ENCODE measurements at regions of chr7 and their contacts with region 1.

Region 1: GRCh38 chr7:81499262-81500116 is 270.4 kb downstream of the HGF start:
- DNase-seq: peak; percentile 72
- H3K4me3 ChIP-seq: no peak overlapping the region
- H3K27ac ChIP-seq: no peak overlapping the region
- H3K27me3 ChIP-seq: no peaks in the 10 kb centered on the region
- CTCF ChIP-seq: peak; percentile 68

Region 2: GRCh38 chr7:80563561-80564327 is 935.7 kb before region 1 on chr7:
- CTCF ChIA-PET with region 1: no interaction called
- POLR2A ChIA-PET with region 1: no interaction called
- DNase-seq: no peak
- H3K4me3 ChIP-seq: no peak overlapping the region
- H3K27ac ChIP-seq: no peak overlapping the region
- H3K27me3 ChIP-seq: no peaks in the 10 kb centered on the region
- CTCF ChIP-seq: no peak

Region 3: GRCh38 chr7:81447351-81447952 is 52.0 kb before region 1 on chr7:
- CTCF ChIA-PET with region 1: no interaction called
- POLR2A ChIA-PET with region 1: no interaction called
- DNase-seq: peak; percentile 15
- H3K4me3 ChIP-seq: no peak overlapping the region
- H3K27ac ChIP-seq: no peak overlapping the region
- H3K27me3 ChIP-seq: no peaks in the 10 kb centered on the region
- CTCF ChIP-seq: peak; percentile 69

Region 4: DNA sequence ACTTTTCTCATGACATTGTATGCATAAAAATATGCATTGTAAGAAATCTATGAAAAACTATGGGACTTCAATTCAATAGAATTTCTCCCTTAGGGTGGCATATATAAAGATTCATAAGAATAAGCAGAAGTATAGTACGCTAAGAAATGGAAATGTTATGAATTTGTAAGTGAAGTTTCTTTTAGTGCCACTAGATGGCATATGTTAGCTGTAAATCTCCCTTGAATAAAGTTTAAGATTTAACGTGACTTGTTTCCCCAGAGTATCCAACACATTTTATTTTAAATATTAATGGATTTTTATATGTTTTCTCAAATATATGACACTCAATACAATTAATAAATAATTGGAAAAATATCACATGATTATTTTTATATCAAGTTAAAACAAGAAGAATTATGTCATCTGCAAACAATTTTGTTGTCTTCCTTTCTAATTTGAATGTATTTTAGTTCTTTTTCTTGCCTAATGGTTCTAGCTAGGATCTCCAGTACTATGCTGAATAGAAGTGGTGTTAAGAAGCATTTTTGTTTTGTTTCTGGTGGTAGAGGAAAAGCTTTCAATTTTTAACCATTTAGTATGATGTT is 16.8 kb before region 1 on chr7:
- CTCF ChIA-PET with region 1: interaction called, 10 read pairs
- POLR2A ChIA-PET with region 1: no interaction called
- DNase-seq: no peak
- H3K4me3 ChIP-seq: no peak overlapping the region
- H3K27ac ChIP-seq: no peak overlapping the region
- H3K27me3 ChIP-seq: no peaks in the 10 kb centered on the region
- CTCF ChIP-seq: peak; percentile 56

Region 5: DNA sequence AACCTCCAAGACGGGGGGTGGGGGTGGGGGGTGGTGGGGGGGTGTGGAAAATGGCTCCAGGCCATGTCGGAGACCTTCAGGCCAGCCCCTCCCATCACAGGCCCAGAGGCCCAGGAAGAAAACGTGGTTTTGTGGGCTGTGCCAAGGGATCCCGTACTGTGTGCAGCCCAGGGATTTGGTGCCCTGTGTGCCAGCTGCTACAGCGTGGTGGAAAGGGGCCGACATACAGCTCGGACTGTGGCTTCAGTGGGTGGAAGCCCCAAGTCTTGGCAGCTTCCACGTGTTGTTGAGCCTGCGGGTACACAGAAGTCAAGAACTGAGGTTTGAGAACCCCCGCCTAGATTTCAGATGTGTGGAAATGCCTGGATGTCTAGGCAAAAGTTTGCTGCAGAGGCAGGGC is 10.6 kb after region 1 on chr7:
- CTCF ChIA-PET with region 1: no interaction called
- POLR2A ChIA-PET with region 1: no interaction called
- DNase-seq: no peak
- H3K4me3 ChIP-seq: no peak overlapping the region
- H3K27ac ChIP-seq: no peak overlapping the region
- H3K27me3 ChIP-seq: no peaks in the 10 kb centered on the region
- CTCF ChIP-seq: no peak

Region 6: GRCh38 chr7:81725812-81726127 is 226.3 kb after region 1 on chr7:
- CTCF ChIA-PET with region 1: interaction called, 19 read pairs
- POLR2A ChIA-PET with region 1: no interaction called
- DNase-seq: peak; percentile 98
- H3K4me3 ChIP-seq: no peak overlapping the region
- H3K27ac ChIP-seq: peak overlapping the region; percentile 83
- H3K27me3 ChIP-seq: no peaks in the 10 kb centered on the region
- CTCF ChIP-seq: no peak

Region 7: DNA sequence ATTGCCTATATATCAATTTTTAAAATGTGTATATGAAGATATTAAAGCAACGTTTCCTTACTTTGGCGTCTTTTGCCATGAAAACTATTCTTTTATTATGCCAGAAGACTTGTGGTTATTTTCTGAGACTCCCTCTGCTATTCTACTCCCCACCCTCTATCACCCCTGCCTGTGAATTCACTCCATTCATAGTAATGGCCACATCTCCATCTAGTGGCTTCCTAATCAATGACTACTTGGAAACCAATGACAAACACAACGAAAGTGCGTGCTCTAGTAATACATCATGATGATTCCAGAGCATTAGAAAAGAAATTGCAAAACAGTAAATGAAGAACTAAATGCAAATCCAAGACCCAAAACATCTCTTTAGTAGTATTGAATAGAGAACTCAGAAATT is 457.0 kb after region 1 on chr7:
- CTCF ChIA-PET with region 1: interaction called, 72 read pairs
- POLR2A ChIA-PET with region 1: interaction called, 4 read pairs
- DNase-seq: peak; percentile 32
- H3K4me3 ChIP-seq: no peak overlapping the region
- H3K27ac ChIP-seq: no peak overlapping the region
- H3K27me3 ChIP-seq: no peaks in the 10 kb centered on the region
- CTCF ChIP-seq: peak; percentile 71

Region 8: GRCh38 chr7:82044497-82045080 is 545.1 kb after region 1 on chr7:
- CTCF ChIA-PET with region 1: interaction called, 10 read pairs
- POLR2A ChIA-PET with region 1: no interaction called
- DNase-seq: no peak
- H3K4me3 ChIP-seq: no peak overlapping the region
- H3K27ac ChIP-seq: no peak overlapping the region
- H3K27me3 ChIP-seq: no peaks in the 10 kb centered on the region
- CTCF ChIP-seq: peak; percentile 66